GM12878 (cell line): ENCODE measurements at regions of chr9 and their contacts with region 1.

Region 1: GRCh38 chr9:33835625-33836260 is 18.8 kb downstream of the UBE2R2 start:
- DNase-seq: no peak
- ATAC-seq: peak; percentile 35
- H3K4me3 ChIP-seq: no peak overlapping the region; the same call in 1 of the 2 replicates
- H3K27ac ChIP-seq: no peak overlapping the region; the same call in 1 of the 2 replicates
- H3K4me1 ChIP-seq: peaks cover 11% of the 10 kb centered on the region
- H3K27me3 ChIP-seq: no peaks in the 10 kb centered on the region
- CTCF ChIP-seq: no peak
- EP300 ChIP-seq: no peak
- POLR2A ChIP-seq: no peak
- RAD21 ChIP-seq: no peak

Region 2: GRCh38 chr9:33823801-33824200 is 11.9 kb before region 1 on chr9:
- CTCF ChIA-PET with region 1: interaction called, 6 read pairs
- POLR2A ChIA-PET with region 1: interaction called, 5 read pairs
- RAD21 ChIA-PET with region 1: interaction called, 4 read pairs
- SMC1A ChIA-PET with region 1: interaction called, 15 read pairs
- in situ Hi-C with region 1: no loop called
- intact Hi-C with region 1: no loop called
- DNase-seq: no peak
- ATAC-seq: peak; percentile 51
- H3K4me3 ChIP-seq: peak overlapping the region; percentile 42; the same call in 1 of the 2 replicates
- H3K27ac ChIP-seq: peak overlapping the region; percentile 25; the same call in 1 of the 2 replicates
- H3K4me1 ChIP-seq: peaks cover 12% of the 10 kb centered on the region
- H3K27me3 ChIP-seq: no peaks in the 10 kb centered on the region
- CTCF ChIP-seq: no peak
- EP300 ChIP-seq: no peak
- POLR2A ChIP-seq: no peak
- RAD21 ChIP-seq: no peak

Region 3: GRCh38 chr9:33867747-33868439 is 32.1 kb after region 1 on chr9:
- CTCF ChIA-PET with region 1: no interaction called
- POLR2A ChIA-PET with region 1: no interaction called
- RAD21 ChIA-PET with region 1: no interaction called
- SMC1A ChIA-PET with region 1: no interaction called
- in situ Hi-C with region 1: no loop called
- intact Hi-C with region 1: no loop called
- DNase-seq: no peak
- ATAC-seq: no peak
- H3K4me3 ChIP-seq: no peak overlapping the region
- H3K27ac ChIP-seq: no peak overlapping the region
- H3K4me1 ChIP-seq: peaks cover 10% of the 10 kb centered on the region
- H3K27me3 ChIP-seq: no peaks in the 10 kb centered on the region
- CTCF ChIP-seq: no peak
- EP300 ChIP-seq: no peak
- POLR2A ChIP-seq: no peak
- RAD21 ChIP-seq: no peak

Region 4: DNA sequence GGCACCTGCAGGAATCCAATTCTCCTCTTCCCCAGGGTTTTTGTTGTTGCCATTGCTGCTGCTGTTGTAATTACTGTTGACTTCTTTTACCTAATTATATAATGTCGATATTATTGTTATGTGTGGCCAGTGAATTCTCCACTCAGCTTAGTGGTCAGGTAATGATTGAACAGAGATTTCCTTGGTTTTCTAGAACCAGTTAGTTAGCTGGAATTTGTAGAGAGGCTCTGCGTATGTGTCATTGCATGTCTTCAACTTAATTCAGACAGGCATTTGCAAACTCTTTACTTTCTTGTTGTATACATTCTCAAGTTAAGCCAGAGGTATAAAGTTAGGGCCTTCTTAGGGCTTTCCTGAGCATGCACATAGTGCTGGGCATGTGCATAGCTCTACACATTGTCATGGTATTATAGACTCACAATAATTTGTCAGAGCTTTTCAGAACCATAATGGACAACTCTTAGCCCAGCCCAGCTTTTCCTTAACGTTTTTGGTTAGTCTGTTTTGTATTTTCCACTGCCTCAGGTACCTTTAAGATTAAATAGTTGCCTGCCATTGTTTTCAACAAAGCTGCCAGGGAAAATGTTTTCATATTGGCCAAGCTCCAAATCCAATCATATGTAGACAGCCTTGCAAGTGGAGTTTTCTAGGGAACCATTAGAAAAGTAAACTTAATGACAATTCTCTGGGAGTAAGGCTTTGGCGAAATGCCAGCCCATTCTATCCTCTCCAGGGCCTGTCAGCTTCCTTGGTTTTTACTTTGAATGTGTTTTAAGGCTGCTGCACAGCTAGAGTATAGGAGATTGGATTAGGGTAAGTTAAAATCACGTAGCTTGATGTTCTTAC is 49.3 kb after region 1 on chr9:
- CTCF ChIA-PET with region 1: no interaction called
- POLR2A ChIA-PET with region 1: no interaction called
- RAD21 ChIA-PET with region 1: no interaction called
- SMC1A ChIA-PET with region 1: interaction called, 3 read pairs
- in situ Hi-C with region 1: loop called (anchors 5 kb)
- intact Hi-C with region 1: no loop called
- DNase-seq: no peak
- ATAC-seq: no peak
- H3K4me3 ChIP-seq: no peak overlapping the region
- H3K27ac ChIP-seq: no peak overlapping the region
- H3K4me1 ChIP-seq: no peaks in the 10 kb centered on the region
- H3K27me3 ChIP-seq: no peaks in the 10 kb centered on the region
- CTCF ChIP-seq: no peak
- EP300 ChIP-seq: no peak
- POLR2A ChIP-seq: no peak
- RAD21 ChIP-seq: no peak